Vagina (tissue), 2 donors: ENCODE measurements at regions of chr2 and their contacts with region 1.

Region 1: GRCh38 chr2:73828818-73829570 is at the start of gene STAMBP:
- DNase-seq: peak; percentile 97 to 98
- H3K4me3 ChIP-seq: peak within 1 kb of the TSS; percentile 70 to 82
- H3K27ac ChIP-seq: peak within 1 kb of the TSS; percentile 94
- H3K4me1 ChIP-seq: peaks cover 48% of the 10 kb centered on the region
- H3K27me3 ChIP-seq: no peaks in the 10 kb centered on the region
- CTCF ChIP-seq: peak in 1 of 3 experiments; percentile 22
- POLR2A ChIP-seq: peak in 1 of 2 donors; percentile 55
- total RNA-seq, gene STAMBP: 30.4 TPM

Region 2: DNA sequence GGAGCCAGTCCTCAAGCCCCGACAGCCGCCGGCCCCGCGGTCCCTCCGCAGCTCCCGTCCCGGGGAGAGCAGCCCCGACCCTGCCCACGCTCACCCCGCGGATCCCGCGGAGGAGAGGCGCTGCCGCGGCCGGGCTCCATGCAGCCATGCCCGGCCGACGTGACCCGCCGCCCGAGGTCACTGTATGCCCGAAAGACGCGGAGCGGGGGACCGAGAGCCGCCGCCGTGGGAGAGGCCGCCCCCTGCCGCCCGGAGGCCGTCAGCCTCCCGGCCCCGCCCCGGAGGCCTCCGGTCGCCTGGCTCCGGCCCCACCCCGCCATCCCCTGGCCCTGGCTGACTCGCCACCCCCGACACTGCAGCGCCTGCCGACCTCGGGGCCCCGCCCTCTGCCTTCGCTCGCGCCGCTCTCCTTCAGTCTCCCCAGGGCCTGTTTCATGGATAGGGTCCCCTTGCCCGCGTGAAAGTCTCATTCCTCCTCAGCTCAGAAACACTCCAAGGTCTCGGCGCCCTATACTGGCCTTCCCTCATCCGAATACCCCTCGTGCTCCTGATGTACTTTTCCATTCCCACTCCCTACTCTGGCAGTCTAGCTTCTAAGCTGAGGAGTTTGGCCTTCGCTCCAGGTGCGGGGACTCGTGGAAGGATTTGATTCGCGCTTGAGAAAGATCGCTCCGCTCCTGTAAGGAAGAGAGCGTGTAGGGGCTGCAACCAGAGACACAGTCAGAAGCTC is 318.9 kb after region 1 on chr2 and contains the start of gene BOLA3:
- intact Hi-C with region 1: loop called (anchors 10 kb)
- DNase-seq: no peak
- H3K4me3 ChIP-seq: peak within 1 kb of the TSS; percentile 69
- H3K27ac ChIP-seq: peak within 1 kb of the TSS; percentile 72
- H3K4me1 ChIP-seq: peaks cover 28% of the 10 kb centered on the region
- H3K27me3 ChIP-seq: no peaks in the 10 kb centered on the region
- CTCF ChIP-seq: peak; percentile 28 to 85 (median 31)
- POLR2A ChIP-seq: no peak
- total RNA-seq, gene BOLA3: 59.7 TPM

Region 3: DNA sequence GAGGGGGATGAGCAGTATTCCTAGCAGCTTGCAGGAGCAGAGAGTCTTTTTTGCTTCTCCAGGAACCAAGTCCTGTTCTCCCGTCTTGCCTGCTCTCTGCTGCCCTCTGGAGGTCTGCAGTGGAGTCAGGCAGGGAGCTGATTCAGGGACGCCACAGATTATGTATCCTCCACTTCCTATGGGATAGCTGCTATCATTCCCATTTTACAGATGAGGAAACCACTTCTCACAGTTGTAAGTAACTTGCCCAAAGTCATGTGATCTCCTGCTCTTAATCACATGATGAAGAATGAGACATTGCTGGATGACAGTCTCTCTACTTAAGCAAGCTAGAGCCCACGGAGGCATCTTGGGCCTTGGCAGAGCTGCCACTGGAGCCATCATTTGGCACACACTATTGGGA is 505.9 kb after region 1 on chr2:
- intact Hi-C with region 1: loop called (anchors 10 kb)
- DNase-seq: peak in 1 of 2 donors; percentile 65
- H3K4me3 ChIP-seq: no peak overlapping the region
- H3K27ac ChIP-seq: no peak overlapping the region
- H3K4me1 ChIP-seq: no peaks in the 10 kb centered on the region
- H3K27me3 ChIP-seq: no peaks in the 10 kb centered on the region
- CTCF ChIP-seq: peak; percentile 53 to 82 (median 67)
- POLR2A ChIP-seq: no peak